CD14-positive monocyte (primary cell): ENCODE measurements at regions of chr6 and their contacts with region 1.

Region 1: DNA sequence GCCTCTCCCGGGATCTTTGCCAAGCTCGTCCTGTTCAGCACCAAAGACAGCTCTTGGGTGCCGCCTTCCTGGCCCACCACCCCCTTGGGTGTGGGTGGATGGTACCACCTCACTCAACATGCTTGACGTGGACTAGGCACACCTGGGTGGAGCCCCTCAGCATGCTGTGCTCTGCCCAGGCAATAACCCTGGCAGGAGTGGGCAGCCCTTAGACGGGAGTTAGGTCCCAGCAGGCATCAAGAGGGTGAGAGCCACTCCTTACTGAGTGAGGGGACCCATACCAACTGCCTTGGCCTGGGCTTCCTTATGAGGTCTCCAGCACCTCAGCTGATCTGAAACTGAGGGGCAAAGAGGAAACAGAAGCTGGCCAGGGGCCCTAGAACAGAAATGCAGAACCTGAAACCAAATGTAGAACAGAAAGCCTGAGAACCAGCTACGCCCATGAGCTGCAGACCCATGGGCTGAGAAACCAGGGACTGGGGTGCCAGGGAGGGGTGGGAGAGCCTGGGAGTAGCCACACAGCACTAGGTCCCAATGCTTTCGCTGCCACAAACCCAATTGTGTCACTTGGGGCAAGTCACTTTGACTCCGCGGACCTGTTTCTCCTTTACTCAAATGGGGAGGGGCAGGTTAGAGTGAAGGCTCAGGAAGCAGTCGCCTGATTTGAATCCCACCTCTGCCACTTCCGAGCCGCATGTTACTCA is 2.0 kb downstream of the FGD2 start:
- DNase-seq: peak; percentile 77 to 88 (median 79)
- H3K4me3 ChIP-seq: peak overlapping the region; percentile 87 to 93 (median 92)
- H3K4me3 Mint-ChIP-seq: peak overlapping the region; percentile 89 to 99
- H3K27ac ChIP-seq: peak overlapping the region; percentile 86 to 94
- H3K27ac Mint-ChIP-seq: peak overlapping the region; percentile 93 to 98 (median 96)
- H3K4me1 ChIP-seq: peaks cover 48 to 64% of the 10 kb centered on the region in 2 donors
- H3K4me1 Mint-ChIP-seq: peaks cover 62% of the 10 kb centered on the region
- H3K27me3 ChIP-seq: no peaks in the 10 kb centered on the region
- H3K27me3 Mint-ChIP-seq: peaks cover 0 to 4% (median 0%) of the 10 kb centered on the region in 3 donors
- CTCF ChIP-seq: no peak

Region 2: DNA sequence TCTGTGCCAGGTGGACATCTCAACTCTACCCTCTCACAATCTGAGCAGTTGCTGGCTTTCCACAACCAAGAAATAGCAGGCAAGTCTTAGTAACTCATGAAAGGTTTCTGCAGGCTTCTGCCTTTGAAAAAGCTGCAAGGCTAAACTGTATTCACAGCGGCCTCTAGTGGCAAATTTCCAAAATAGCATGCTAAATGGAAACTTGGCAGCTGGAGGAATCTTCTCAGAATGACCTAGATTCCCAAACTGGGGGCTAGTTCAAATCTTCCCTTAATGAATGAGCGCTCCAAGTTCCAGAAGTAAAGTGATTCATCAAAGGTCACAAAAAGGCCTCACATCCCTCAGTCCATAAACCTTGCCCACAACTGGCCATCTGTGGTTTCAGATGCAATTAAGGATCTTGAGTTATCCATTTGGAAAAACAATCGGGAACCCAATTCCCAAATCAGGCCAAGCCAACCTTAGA is 156.3 kb before region 1 on chr6:
- intact Hi-C with region 1: no loop called
- DNase-seq: peak; percentile 41 to 69 (median 58)
- H3K4me3 ChIP-seq: no peak overlapping the region
- H3K4me3 Mint-ChIP-seq: peak overlapping the region in 1 of 2 donors; percentile 30
- H3K27ac ChIP-seq: no peak overlapping the region
- H3K27ac Mint-ChIP-seq: peak overlapping the region in 1 of 7 donors; percentile 94
- H3K4me1 ChIP-seq: peaks cover 49 to 55% of the 10 kb centered on the region in 2 donors
- H3K4me1 Mint-ChIP-seq: peaks cover 59% of the 10 kb centered on the region
- H3K27me3 ChIP-seq: no peaks in the 10 kb centered on the region
- H3K27me3 Mint-ChIP-seq: peaks cover 3 to 9% (median 6%) of the 10 kb centered on the region in 3 donors
- CTCF ChIP-seq: peak; percentile 84

Region 3: GRCh38 chr6:36885461-36886401 is 121.8 kb before region 1 on chr6 and contains the start of gene C6orf89:
- intact Hi-C with region 1: no loop called
- DNase-seq: peak; percentile 98 to 99 (median 99)
- H3K4me3 ChIP-seq: peak within 1 kb of the TSS; percentile 85 to 94 (median 87)
- H3K4me3 Mint-ChIP-seq: peak within 1 kb of the TSS; percentile 89 to 93
- H3K27ac ChIP-seq: peak within 1 kb of the TSS; percentile 53 to 91
- H3K27ac Mint-ChIP-seq: peak within 1 kb of the TSS; percentile 85 to 97 (median 92)
- H3K4me1 ChIP-seq: peaks cover 15 to 17% of the 10 kb centered on the region in 2 donors
- H3K4me1 Mint-ChIP-seq: peaks cover 25% of the 10 kb centered on the region
- H3K27me3 ChIP-seq: no peaks in the 10 kb centered on the region
- H3K27me3 Mint-ChIP-seq: no peaks in the 10 kb centered on the region
- CTCF ChIP-seq: peak; percentile 84
- polyA plus RNA-seq, gene C6orf89: 19.2 to 37.5 (median 29.2) TPM

Region 4: DNA sequence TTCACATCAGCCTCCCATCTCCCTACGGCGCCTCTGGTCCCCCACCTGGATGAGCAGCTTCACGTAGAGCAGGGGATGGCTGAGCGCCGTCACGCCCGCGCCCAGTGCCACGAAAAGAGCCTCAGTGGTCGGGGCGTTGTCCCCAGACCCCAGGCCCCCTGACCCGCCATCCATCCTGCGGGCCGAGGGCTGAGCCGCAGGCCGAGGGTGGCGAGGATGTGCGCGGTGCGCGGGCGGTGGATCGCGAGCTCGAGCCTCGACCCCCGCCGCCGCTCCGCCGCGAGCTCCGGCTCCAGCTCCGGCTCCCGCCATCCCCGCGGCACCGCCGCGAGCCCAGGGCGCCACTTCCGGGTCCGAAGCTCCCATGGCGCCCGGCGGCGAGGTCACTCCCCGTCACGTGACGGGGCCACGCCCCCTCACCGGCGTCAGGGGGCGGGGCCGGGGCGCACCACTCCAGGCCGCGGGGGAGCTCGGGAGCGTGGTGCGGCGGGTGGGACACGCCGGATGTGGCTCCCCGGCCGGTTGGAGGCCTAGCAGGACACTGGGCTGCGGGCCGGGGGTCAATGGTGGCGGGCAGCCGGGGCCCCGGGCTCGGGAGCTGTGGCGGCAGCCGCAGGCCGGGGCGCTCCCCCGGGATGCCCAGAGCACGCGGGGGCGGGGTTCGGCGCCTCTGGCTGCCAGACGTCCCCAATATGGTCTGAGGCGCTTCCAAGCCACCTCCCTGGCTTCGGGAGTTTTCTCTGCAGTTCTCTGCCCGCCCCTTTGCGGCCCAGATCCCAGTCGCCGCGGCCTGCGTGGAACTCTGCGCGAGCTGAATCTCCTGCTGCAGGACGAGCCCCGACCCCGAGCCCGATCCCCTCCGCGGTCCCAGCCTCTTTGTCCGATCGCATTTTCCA is 21.4 kb before region 1 on chr6 and contains the start of gene MTCH1:
- intact Hi-C with region 1: loop called in 1 of 2 experiments (anchors 2 kb)
- DNase-seq: peak; percentile 83 to 90 (median 88)
- H3K4me3 ChIP-seq: peak within 1 kb of the TSS; percentile 90 to 98 (median 94)
- H3K4me3 Mint-ChIP-seq: peak within 1 kb of the TSS; percentile 91 to 97
- H3K27ac ChIP-seq: peak within 1 kb of the TSS; percentile 50 to 95
- H3K27ac Mint-ChIP-seq: peak within 1 kb of the TSS; percentile 79 to 96 (median 92)
- H3K4me1 ChIP-seq: peaks cover 40 to 44% of the 10 kb centered on the region in 2 donors
- H3K4me1 Mint-ChIP-seq: peaks cover 14% of the 10 kb centered on the region
- H3K27me3 ChIP-seq: no peaks in the 10 kb centered on the region
- H3K27me3 Mint-ChIP-seq: peaks cover 0 to 7% (median 5%) of the 10 kb centered on the region in 3 donors
- CTCF ChIP-seq: no peak
- polyA plus RNA-seq, gene MTCH1: 111 to 118 (median 111) TPM